Heart right ventricle (tissue), 16 donors: ENCODE measurements at regions of chr13 and their contacts with region 1.

Region 1: DNA sequence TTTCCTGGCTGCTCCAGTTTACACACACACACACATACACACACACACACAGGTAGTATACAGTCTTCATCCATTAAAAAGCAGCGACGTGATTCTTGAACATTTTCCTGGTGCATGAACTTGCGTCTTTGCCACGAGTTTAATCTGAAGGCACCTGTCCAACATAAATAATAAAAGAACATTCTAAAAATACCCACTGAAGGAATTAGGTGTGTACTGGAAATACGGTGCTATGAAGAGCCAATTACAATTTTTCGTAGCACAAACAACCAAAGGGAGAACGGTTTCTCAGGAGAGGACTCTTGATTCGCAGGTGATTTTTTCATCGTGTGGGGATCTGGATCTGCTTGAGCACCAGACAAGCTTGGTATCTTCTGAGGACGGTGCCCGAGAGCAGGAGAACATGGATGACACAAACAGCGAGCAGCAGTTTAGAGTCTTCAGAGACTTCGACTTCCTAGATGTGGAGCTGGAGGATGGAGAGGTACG is 61.2 kb downstream of the ZAR1L start:
- DNase-seq: peak in 1 of 2 donors; percentile 45
- ATAC-seq: peak; percentile 41 to 80 (median 70)
- H3K4me3 ChIP-seq: peak overlapping the region in 9 of 10 donors; percentile 37 to 54 (median 46)
- H3K27ac ChIP-seq: peak overlapping the region; percentile 79 to 92 (median 86)
- H3K4me1 ChIP-seq: peaks cover 0 to 70% (median 35%) of the 10 kb centered on the region in 9 donors
- H3K27me3 ChIP-seq: no peaks in the 10 kb centered on the region
- CTCF ChIP-seq: no peak

Region 2: DNA sequence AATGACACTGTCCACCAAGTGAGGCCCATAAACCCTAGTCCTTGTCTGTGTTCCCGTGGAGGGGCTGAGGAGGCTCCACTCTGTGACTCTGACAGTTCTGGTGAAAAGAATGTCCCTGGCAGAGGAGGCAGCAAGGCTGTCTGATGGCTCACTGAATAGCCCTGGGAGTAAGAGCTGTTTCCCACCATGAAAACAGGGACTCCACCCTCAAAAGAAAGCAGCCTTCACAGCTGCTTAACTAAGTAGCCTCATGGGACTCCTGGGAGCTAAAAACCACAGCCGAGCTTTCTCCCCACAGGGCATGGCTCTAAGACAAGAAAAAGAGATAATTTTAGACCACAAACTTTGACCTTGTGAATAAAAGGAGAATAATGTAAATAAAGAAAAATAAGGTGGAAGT is 357.5 kb before region 1 on chr13:
- intact Hi-C with region 1: no loop called
- DNase-seq: peak; percentile 19 to 41
- ATAC-seq: peak; percentile 16 to 91 (median 78)
- H3K4me3 ChIP-seq: no peak overlapping the region
- H3K27ac ChIP-seq: peak overlapping the region; percentile 45 to 91 (median 72)
- H3K4me1 ChIP-seq: peaks cover 23 to 83% (median 66%) of the 10 kb centered on the region in 9 donors
- H3K27me3 ChIP-seq: no peaks in the 10 kb centered on the region
- CTCF ChIP-seq: no peak

Region 3: GRCh38 chr13:32284927-32285632 is 31.1 kb after region 1 on chr13:
- intact Hi-C with region 1: loop called in 4 of 10 experiments (anchors 5 to 10 kb)
- DNase-seq: peak in 1 of 2 donors; percentile 79
- ATAC-seq: peak in 7 of 8 donors; percentile 56 to 81 (median 79)
- H3K4me3 ChIP-seq: no peak overlapping the region
- H3K27ac ChIP-seq: peak overlapping the region in 9 of 10 donors; percentile 52 to 84 (median 71)
- H3K4me1 ChIP-seq: peaks cover 5 to 45% (median 24%) of the 10 kb centered on the region in 9 donors
- H3K27me3 ChIP-seq: no peaks in the 10 kb centered on the region
- CTCF ChIP-seq: no peak